Activated naive CD4-positive, alpha-beta T cell treated with anti-CD3 and anti-CD28 coated beads, Interleukin-2, amount 10 ng/mL, durations not matched to agents 7 days and 5 days (primary cell): ENCODE measurements at regions of chr12 and their contacts with region 1.

Region 1: GRCh38 chr12:42023733-42024494 is 120.8 kb downstream of the GXYLT1 start:
- DNase-seq: peak; percentile 76
- H3K4me3 Mint-ChIP-seq: peak overlapping the region; percentile 2
- H3K27ac Mint-ChIP-seq: no peak overlapping the region
- H3K4me1 Mint-ChIP-seq: peaks cover 8% of the 10 kb centered on the region
- H3K27me3 Mint-ChIP-seq: peaks cover 3% of the 10 kb centered on the region

Region 2: GRCh38 chr12:40946612-40947194 is 1077.2 kb before region 1 on chr12:
- CTCF ChIA-PET with region 1: interaction called, 10 read pairs
- DNase-seq: no peak
- H3K4me3 Mint-ChIP-seq: no peak overlapping the region
- H3K27ac Mint-ChIP-seq: no peak overlapping the region
- H3K4me1 Mint-ChIP-seq: no peaks in the 10 kb centered on the region
- H3K27me3 Mint-ChIP-seq: no peaks in the 10 kb centered on the region

Region 3: GRCh38 chr12:41277116-41277945 is 746.6 kb before region 1 on chr12:
- CTCF ChIA-PET with region 1: interaction called, 19 read pairs
- DNase-seq: peak; percentile 28
- H3K4me3 Mint-ChIP-seq: no peak overlapping the region
- H3K27ac Mint-ChIP-seq: no peak overlapping the region
- H3K4me1 Mint-ChIP-seq: no peaks in the 10 kb centered on the region
- H3K27me3 Mint-ChIP-seq: no peaks in the 10 kb centered on the region

Region 4: DNA sequence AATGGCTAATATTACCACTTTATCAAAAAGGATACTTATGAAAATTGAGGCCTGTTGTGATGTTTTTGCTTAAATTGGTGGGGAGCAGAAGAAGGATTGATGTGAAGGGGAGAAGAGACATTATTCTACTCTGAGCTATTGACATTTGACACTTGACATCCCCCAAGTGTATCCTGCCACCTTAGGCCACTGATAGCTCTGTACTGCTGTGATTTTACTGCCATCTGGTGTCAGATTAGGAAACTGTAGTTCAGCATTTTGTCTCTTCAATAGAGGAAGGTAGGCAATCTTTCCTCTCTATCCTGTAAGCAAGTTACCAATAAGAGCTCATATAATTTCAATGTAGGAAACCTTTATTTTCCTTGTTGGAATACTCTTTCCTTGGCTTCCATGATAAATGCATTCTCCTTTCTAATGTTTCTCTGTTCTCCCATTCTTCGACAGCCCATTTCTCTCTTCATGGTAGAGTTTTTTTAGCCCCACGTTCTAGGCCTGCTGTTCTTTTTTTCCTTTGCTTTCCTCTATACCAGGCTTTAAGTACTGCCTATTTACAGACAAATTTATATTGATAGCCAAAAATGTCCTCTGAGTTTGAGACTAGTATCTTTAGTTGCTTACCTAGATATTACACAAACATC is 348.4 kb after region 1 on chr12:
- CTCF ChIA-PET with region 1: interaction called, 17 read pairs
- DNase-seq: peak; percentile 37
- H3K4me3 Mint-ChIP-seq: no peak overlapping the region
- H3K27ac Mint-ChIP-seq: no peak overlapping the region
- H3K4me1 Mint-ChIP-seq: no peaks in the 10 kb centered on the region
- H3K27me3 Mint-ChIP-seq: no peaks in the 10 kb centered on the region